Activated CD4-positive, alpha-beta T cell treated with anti-CD3 and anti-CD28 coated beads, Interleukin-2, amount 10 ng/mL, durations not matched to agents 24 days and 14 days (primary cell): ENCODE measurements at regions of chr12 and their contacts with region 1.

Region 1: DNA sequence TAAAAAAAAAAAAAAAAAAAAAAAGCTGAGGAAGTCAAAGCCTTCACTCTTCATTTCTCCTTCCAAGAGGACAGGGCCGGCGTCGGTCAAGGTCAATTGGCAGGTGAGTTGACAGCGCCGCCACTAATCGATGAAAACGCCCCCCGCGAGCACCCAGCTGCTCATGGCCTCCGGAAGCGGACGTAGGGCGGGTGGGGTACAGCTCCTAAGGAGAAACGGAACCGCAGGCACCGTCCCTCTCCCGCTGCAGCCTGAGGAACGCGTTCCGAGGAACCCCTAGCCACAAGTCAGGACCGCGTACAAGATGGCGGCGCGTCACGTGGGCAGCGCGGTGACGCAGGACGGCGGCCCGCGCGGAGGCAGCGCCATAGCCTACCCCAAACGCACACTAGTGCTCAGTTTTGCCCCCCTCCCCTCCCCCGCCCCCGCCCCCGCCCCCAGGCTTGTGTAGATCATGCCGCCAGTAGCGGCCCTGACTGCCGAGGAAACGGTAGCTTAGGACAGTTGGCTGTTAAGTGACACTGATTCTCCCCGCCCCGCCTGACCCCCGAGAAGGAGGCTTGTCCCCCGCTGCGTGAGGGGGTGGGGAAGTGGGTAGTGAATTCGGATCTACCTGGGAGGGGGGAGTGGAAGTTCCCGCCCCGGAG is at the start of gene ATF1:
- DNase-seq: peak; percentile 98
- H3K4me3 Mint-ChIP-seq: peak within 1 kb of the TSS; percentile 94
- H3K27ac Mint-ChIP-seq: peak within 1 kb of the TSS; percentile 99
- H3K4me1 Mint-ChIP-seq: peaks cover 31% of the 10 kb centered on the region
- H3K27me3 Mint-ChIP-seq: no peaks in the 10 kb centered on the region
- total RNA-seq, gene ATF1: 66.0 and 67.6 TPM in 2 replicates

Region 2: GRCh38 chr12:50458606-50459005 is 305.2 kb before region 1 on chr12:
- intact Hi-C with region 1: no loop called
- DNase-seq: no peak
- H3K4me3 Mint-ChIP-seq: no peak overlapping the region
- H3K27ac Mint-ChIP-seq: no peak overlapping the region
- H3K4me1 Mint-ChIP-seq: no peaks in the 10 kb centered on the region
- H3K27me3 Mint-ChIP-seq: no peaks in the 10 kb centered on the region

Region 3: GRCh38 chr12:50979369-50980052 is 215.7 kb after region 1 on chr12:
- intact Hi-C with region 1: loop called (anchors 2 kb)
- DNase-seq: peak; percentile 87
- H3K4me3 Mint-ChIP-seq: peak overlapping the region; percentile 64
- H3K27ac Mint-ChIP-seq: peak overlapping the region; percentile 95
- H3K4me1 Mint-ChIP-seq: peaks cover 23% of the 10 kb centered on the region
- H3K27me3 Mint-ChIP-seq: no peaks in the 10 kb centered on the region

Region 4: DNA sequence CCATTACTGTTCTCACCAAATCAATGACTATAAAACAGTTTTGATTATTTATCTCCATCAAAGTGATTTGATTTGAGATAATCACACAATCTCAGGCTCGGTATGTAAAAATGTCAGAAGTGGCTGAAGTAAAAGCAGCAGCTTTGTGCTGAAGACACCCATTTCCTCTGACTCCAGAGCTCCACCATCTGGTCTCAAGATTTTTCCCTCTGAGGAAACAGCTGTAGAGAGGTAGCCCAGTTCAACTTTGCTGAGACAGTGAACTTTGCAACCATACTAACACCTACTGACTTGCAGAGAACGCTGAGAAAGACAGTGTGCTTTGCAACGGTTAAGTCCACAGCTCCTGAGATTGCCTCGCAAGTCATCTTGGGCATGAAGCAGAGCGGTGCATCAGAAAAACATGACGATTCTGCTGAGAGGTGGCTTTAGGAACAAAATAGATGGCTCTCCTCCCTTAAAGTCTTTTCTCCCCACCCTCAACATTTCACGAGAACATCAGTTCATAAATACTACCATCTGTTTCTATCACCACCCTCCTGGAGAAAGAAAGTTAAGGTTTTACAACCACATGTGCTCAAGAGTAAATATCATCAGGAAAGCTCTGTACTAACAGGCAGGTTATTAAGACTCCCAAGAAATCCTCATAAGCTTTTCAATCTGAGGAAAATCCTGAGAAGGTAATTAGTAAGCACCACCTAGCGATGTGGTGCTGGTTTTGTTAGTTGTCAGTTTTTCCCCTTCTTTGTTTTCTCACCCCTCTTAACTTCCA is 223.4 kb after region 1 on chr12:
- intact Hi-C with region 1: loop called (anchors 2 kb)
- DNase-seq: peak; percentile 86
- H3K4me3 Mint-ChIP-seq: no peak overlapping the region
- H3K27ac Mint-ChIP-seq: peak overlapping the region; percentile 55
- H3K4me1 Mint-ChIP-seq: peaks cover 36% of the 10 kb centered on the region
- H3K27me3 Mint-ChIP-seq: no peaks in the 10 kb centered on the region